ENCODE measurements at regions of chr1 and their contacts with region 1.

Region 1: GRCh38 chr1:35564037-35564883 is 6.7 kb downstream of the NCDN start:
- DNase-seq: peak; percentile 82
- ATAC-seq: peak; percentile 71
- H3K4me3 ChIP-seq: no peak overlapping the region
- H3K4me3 Mint-ChIP-seq: no peak overlapping the region
- H3K27ac ChIP-seq: no peak overlapping the region
- H3K27ac Mint-ChIP-seq: no peak overlapping the region
- H3K4me1 ChIP-seq: no peaks in the 10 kb centered on the region
- H3K4me1 Mint-ChIP-seq: peaks cover 17% of the 10 kb centered on the region
- H3K27me3 ChIP-seq: no peaks in the 10 kb centered on the region
- H3K27me3 Mint-ChIP-seq: no peaks in the 10 kb centered on the region
- CTCF ChIP-seq: peak; percentile 85

Region 2: DNA sequence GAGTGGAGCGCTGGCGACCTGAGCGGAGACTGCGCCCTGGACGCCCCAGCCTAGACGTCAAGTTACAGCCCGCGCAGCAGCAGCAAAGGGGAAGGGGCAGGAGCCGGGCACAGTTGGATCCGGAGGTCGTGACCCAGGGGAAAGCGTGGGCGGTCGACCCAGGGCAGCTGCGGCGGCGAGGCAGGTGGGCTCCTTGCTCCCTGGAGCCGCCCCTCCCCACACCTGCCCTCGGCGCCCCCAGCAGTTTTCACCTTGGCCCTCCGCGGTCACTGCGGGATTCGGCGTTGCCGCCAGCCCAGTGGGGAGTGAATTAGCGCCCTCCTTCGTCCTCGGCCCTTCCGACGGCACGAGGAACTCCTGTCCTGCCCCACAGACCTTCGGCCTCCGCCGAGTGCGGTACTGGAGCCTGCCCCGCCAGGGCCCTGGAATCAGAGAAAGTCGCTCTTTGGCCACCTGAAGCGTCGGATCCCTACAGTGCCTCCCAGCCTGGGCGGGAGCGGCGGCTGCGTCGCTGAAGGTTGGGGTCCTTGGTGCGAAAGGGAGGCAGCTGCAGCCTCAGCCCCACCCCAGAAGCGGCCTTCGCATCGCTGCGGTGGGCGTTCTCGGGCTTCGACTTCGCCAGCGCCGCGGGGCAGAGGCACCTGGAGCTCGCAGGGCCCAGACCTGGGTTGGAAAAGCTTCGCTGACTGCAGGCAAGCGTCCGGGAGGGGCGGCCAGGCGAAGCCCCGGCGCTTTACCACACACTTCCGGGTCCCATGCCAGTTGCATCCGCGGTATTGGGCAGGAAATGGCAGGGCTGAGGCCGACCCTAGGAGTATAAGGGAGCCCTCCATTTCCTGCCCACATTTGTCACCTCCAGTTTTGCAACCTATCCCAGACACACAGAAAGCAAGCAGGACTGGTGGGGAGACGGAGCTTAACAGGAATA is 13.1 kb after region 1 on chr1:
- CTCF ChIA-PET with region 1: interaction called, 15 read pairs
- POLR2A ChIA-PET with region 1: no interaction called
- intact Hi-C with region 1: no loop called
- DNase-seq: peak; percentile 81
- ATAC-seq: peak; percentile 85
- H3K4me3 ChIP-seq: peak overlapping the region; percentile 60 to 75 (median 71)
- H3K4me3 Mint-ChIP-seq: peak overlapping the region; percentile 91
- H3K27ac ChIP-seq: peak overlapping the region; percentile 43 to 62
- H3K27ac Mint-ChIP-seq: peak overlapping the region; percentile 90
- H3K4me1 ChIP-seq: peaks cover 21 to 39% of the 10 kb centered on the region in 2 donors
- H3K4me1 Mint-ChIP-seq: peaks cover 38% of the 10 kb centered on the region
- H3K27me3 ChIP-seq: peaks cover 0 to 21% (median 6%) of the 10 kb centered on the region in 4 experiments
- H3K27me3 Mint-ChIP-seq: peaks cover 14% of the 10 kb centered on the region
- CTCF ChIP-seq: no peak

Region 3: GRCh38 chr1:35715568-35716002 is 151.3 kb after region 1 on chr1:
- CTCF ChIA-PET with region 1: interaction called, 111 read pairs
- POLR2A ChIA-PET with region 1: interaction called, 17 read pairs
- intact Hi-C with region 1: loop called (anchors 1 kb)
- DNase-seq: peak; percentile 79
- ATAC-seq: peak; percentile 59
- H3K4me3 ChIP-seq: no peak overlapping the region
- H3K4me3 Mint-ChIP-seq: peak overlapping the region; percentile 51
- H3K27ac ChIP-seq: no peak overlapping the region
- H3K27ac Mint-ChIP-seq: peak overlapping the region; percentile 54
- H3K4me1 ChIP-seq: peaks cover 10 to 20% of the 10 kb centered on the region in 2 donors
- H3K4me1 Mint-ChIP-seq: peaks cover 29% of the 10 kb centered on the region
- H3K27me3 ChIP-seq: peaks cover 0 to 3% (median 0%) of the 10 kb centered on the region in 4 experiments
- H3K27me3 Mint-ChIP-seq: no peaks in the 10 kb centered on the region
- CTCF ChIP-seq: peak; percentile 98

Region 4: GRCh38 chr1:35777109-35777508 is 212.8 kb after region 1 on chr1:
- CTCF ChIA-PET with region 1: interaction called, 18 read pairs
- POLR2A ChIA-PET with region 1: no interaction called
- intact Hi-C with region 1: loop called (anchors 1 kb)
- DNase-seq: no peak
- ATAC-seq: no peak
- H3K4me3 ChIP-seq: no peak overlapping the region
- H3K4me3 Mint-ChIP-seq: no peak overlapping the region
- H3K27ac ChIP-seq: no peak overlapping the region
- H3K27ac Mint-ChIP-seq: no peak overlapping the region
- H3K4me1 ChIP-seq: peaks cover 0 to 3% of the 10 kb centered on the region in 2 donors
- H3K4me1 Mint-ChIP-seq: peaks cover 5% of the 10 kb centered on the region
- H3K27me3 ChIP-seq: no peaks in the 10 kb centered on the region
- H3K27me3 Mint-ChIP-seq: no peaks in the 10 kb centered on the region
- CTCF ChIP-seq: no peak

Region 5: GRCh38 chr1:35835398-35835797 is 271.1 kb after region 1 on chr1:
- CTCF ChIA-PET with region 1: no interaction called
- POLR2A ChIA-PET with region 1: interaction called, 11 read pairs
- intact Hi-C with region 1: no loop called
- DNase-seq: no peak
- ATAC-seq: no peak
- H3K4me3 ChIP-seq: no peak overlapping the region
- H3K4me3 Mint-ChIP-seq: no peak overlapping the region
- H3K27ac ChIP-seq: no peak overlapping the region
- H3K27ac Mint-ChIP-seq: no peak overlapping the region
- H3K4me1 ChIP-seq: no peaks in the 10 kb centered on the region
- H3K4me1 Mint-ChIP-seq: no peaks in the 10 kb centered on the region
- H3K27me3 ChIP-seq: no peaks in the 10 kb centered on the region
- H3K27me3 Mint-ChIP-seq: no peaks in the 10 kb centered on the region
- CTCF ChIP-seq: no peak